Ascending aorta (tissue), 2 donors: ENCODE measurements at regions of chr18 and their contacts with region 1.

Region 1: GRCh38 chr18:79988451-79989194 is at the start of gene TXNL4A:
- DNase-seq: peak in 1 of 2 donors; percentile 91
- H3K4me3 ChIP-seq: peak within 1 kb of the TSS; percentile 85 to 91
- H3K27ac ChIP-seq: peak within 1 kb of the TSS; percentile 95 to 97
- H3K4me1 ChIP-seq: peaks cover 8 to 11% of the 10 kb centered on the region in 2 donors
- H3K27me3 ChIP-seq: no peaks in the 10 kb centered on the region
- CTCF ChIP-seq: no peak
- total RNA-seq, gene TXNL4A: 16.5 TPM

Region 2: GRCh38 chr18:79393635-79394533 is 594.7 kb before region 1 on chr18:
- intact Hi-C with region 1: loop called (anchors 10 kb)
- DNase-seq: peak; percentile 63 to 94
- H3K4me3 ChIP-seq: peak overlapping the region; percentile 77 to 92
- H3K27ac ChIP-seq: peak overlapping the region; percentile 98 to 99
- H3K4me1 ChIP-seq: peaks cover 5 to 17% of the 10 kb centered on the region in 2 donors
- H3K27me3 ChIP-seq: no peaks in the 10 kb centered on the region
- CTCF ChIP-seq: no peak

Region 3: GRCh38 chr18:79679111-79679872 is 309.3 kb before region 1 on chr18 and contains the start of gene CTDP1:
- intact Hi-C with region 1: loop called (anchors 2 kb)
- DNase-seq: peak; percentile 96 to 99
- H3K4me3 ChIP-seq: peak within 1 kb of the TSS; percentile 92 to 99
- H3K27ac ChIP-seq: peak within 1 kb of the TSS; percentile 98 to 100
- H3K4me1 ChIP-seq: peaks cover 2 to 18% of the 10 kb centered on the region in 2 donors
- H3K27me3 ChIP-seq: no peaks in the 10 kb centered on the region
- CTCF ChIP-seq: no peak
- total RNA-seq, gene CTDP1: 31.7 TPM

Region 4: DNA sequence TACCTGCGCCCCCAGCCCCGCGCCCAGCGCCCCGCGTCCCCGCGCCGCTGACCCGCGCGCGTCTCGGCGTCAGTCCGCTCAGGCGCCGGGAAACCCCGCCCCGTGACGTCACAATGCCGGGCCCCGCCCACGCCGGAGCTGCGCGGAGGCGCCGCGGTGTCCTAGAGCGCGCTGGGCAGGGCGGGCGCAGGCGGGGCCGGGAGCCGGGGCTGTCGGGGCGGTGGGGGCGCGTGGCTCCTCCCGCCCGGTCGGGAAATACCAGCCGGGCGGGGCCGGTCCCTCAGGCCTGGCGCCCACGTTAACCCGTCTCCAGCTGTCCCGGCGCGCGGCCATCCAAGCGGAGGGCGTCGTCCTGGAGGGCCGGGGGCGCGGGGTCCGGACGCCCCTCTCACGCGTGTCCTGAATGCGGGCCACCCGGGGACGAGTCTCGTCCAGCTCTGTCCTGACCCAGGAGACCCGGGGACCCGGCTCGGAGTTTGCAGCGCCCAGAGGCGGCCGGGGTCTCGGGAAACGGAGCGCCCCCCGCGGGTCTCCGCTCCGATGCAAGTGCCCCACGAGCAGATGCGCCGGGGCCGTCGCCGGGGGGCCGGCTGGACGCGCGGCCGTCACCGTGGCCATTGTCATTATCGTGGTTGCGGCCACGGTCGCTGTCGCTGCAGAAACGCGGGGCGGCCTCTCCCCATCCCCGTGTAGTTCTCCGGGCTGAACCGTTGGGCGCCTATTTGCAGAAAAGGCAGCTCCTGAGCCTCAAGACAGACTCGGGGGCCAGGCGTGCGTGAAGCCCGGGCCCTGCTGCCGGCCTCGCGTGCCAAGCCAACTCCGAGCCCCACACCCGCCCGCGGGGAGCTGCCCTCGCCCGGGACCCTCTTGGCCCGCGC is 36.8 kb before region 1 on chr18 and contains the start of gene SLC66A2:
- intact Hi-C with region 1: loop called (anchors 1 kb)
- DNase-seq: peak; percentile 68 to 95
- H3K4me3 ChIP-seq: peak within 1 kb of the TSS; percentile 98 to 100
- H3K27ac ChIP-seq: peak within 1 kb of the TSS; percentile 68 to 75
- H3K4me1 ChIP-seq: peaks cover 11 to 20% of the 10 kb centered on the region in 2 donors
- H3K27me3 ChIP-seq: no peaks in the 10 kb centered on the region
- CTCF ChIP-seq: peak in 1 of 3 experiments; percentile 4
- total RNA-seq, gene SLC66A2: 52.9 TPM

Region 5: GRCh38 chr18:79964330-79965118 is 24.1 kb before region 1 on chr18 and contains the start of gene HSBP1L1:
- intact Hi-C with region 1: no loop called
- DNase-seq: no peak
- H3K4me3 ChIP-seq: peak within 1 kb of the TSS; percentile 57 to 67
- H3K27ac ChIP-seq: peak within 1 kb of the TSS; percentile 53 to 59
- H3K4me1 ChIP-seq: peaks cover 0 to 13% of the 10 kb centered on the region in 2 donors
- H3K27me3 ChIP-seq: no peaks in the 10 kb centered on the region
- CTCF ChIP-seq: peak in 2 of 3 experiments; percentile 26 to 33
- total RNA-seq, gene HSBP1L1: 1.3 TPM

Region 6: GRCh38 chr18:80009661-80010550 is 21.3 kb after region 1 on chr18:
- intact Hi-C with region 1: loop called (anchors 1 kb)
- DNase-seq: peak; percentile 58 to 89
- H3K4me3 ChIP-seq: peak overlapping the region in 1 of 2 donors; percentile 0
- H3K27ac ChIP-seq: peak overlapping the region; percentile 34 to 66
- H3K4me1 ChIP-seq: no peaks in the 10 kb centered on the region
- H3K27me3 ChIP-seq: no peaks in the 10 kb centered on the region
- CTCF ChIP-seq: no peak

Region 7: DNA sequence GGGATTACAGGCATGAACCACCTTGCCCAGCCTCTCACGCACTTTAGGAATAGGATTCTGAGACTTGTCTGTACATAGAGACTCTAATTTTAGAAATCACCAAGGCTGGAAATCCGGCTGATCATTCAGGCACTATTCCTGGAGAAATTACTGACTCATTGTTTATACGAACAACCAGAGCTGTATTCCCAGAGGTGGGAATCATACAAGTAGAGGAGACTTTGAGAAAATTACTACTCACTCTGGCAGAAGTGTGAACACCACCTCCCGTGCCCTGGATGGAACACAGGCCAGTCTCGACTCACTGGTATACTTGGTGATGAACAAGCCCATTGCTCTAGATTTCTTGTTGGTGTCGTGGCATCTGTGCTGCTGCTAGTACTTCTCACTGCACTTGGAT is 114.6 kb after region 1 on chr18:
- intact Hi-C with region 1: loop called (anchors 2 kb)
- DNase-seq: peak; percentile 44 to 87
- H3K4me3 ChIP-seq: no peak overlapping the region
- H3K27ac ChIP-seq: peak overlapping the region; percentile 39 to 74
- H3K4me1 ChIP-seq: peaks cover 4 to 6% of the 10 kb centered on the region in 2 donors
- H3K27me3 ChIP-seq: no peaks in the 10 kb centered on the region
- CTCF ChIP-seq: no peak

Region 8: DNA sequence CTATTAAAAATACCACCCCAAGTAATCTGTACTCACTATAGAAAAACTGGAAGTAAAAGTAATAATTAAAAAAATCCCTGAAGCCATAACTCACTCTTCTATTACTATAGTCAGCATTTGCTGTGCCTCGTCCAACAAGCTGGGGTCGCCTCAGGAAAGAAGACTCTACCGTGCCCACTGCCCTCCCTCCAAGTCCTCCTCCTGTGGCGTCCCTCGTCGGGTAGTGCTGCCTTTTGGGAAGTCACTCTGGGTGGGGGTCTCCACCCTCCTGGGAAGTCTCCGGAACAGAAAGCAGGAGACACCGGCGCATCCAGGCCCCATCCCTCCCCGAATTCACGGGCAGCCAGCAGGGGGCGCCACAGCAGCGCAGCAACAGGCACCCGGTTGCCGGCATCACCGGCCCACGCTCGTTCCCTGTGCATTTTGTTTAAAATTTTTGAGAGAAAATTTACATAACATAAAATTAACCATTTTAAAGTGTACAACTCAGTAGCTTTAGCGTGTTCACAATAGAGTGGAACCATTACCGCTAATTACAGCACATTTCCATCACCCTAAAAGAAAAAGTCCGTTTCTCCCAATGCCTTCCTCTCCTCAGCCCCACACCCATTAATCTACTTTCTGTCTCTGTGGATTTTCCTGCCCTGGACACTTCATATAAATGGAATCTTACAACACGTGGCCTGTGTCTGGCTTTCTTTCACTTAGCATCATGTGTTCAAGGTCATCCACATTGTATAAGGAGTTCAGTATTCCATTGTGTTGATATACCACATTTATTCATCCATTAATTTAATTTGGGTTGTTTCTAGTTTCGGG is 182.6 kb after region 1 on chr18:
- intact Hi-C with region 1: no loop called
- DNase-seq: no peak
- H3K4me3 ChIP-seq: peak overlapping the region; percentile 32 to 51
- H3K27ac ChIP-seq: no peak overlapping the region
- H3K4me1 ChIP-seq: no peaks in the 10 kb centered on the region
- H3K27me3 ChIP-seq: no peaks in the 10 kb centered on the region
- CTCF ChIP-seq: peak; percentile 65 to 86 (median 74)